Activated CD4-positive, alpha-beta memory T cell treated with anti-CD3 and anti-CD28 coated beads for 36 hours (primary cell): ENCODE measurements at regions of chr3 and their contacts with region 1.

Region 1: GRCh38 chr3:151227807-151228665 is 25.0 kb upstream of the GPR171 start:
- DNase-seq: peak; percentile 87
- H3K4me3 Mint-ChIP-seq: no peak overlapping the region
- H3K27ac Mint-ChIP-seq: peak overlapping the region; percentile 42
- H3K4me1 Mint-ChIP-seq: peaks cover 52% of the 10 kb centered on the region
- H3K27me3 Mint-ChIP-seq: no peaks in the 10 kb centered on the region

Region 2: DNA sequence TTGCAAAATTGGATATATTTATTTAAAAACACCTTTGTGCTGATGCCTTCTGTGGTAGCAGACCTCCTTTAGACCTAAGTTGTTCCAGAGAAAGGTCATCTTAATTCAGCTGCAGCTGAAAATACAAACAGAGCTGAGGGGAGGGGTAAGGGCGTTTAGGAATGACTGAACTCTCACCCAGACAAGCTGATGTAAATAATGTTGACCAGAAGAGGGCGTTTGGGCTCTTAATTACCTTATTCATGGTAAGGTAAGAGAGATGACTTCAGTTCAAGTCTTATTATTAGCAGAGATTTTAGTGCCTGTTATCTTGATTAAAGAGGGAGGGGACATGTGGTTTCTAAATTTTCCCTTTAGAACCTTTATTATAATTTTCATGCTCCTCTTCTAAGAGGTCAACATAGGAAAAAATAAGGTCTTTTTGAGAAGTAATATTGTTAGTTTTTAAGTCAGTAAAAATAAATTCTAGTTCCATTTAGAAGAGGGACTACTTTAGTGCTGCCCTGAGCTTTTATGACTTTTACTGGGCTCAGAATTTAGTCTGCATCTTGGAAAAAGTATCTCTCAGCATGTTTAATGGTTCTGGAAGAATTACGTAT is 71.3 kb before region 1 on chr3:
- CTCF ChIA-PET with region 1: interaction called, 24 read pairs
- POLR2A ChIA-PET with region 1: no interaction called
- intact Hi-C with region 1: loop called (anchors 2 kb)
- DNase-seq: no peak
- H3K4me3 Mint-ChIP-seq: no peak overlapping the region
- H3K27ac Mint-ChIP-seq: no peak overlapping the region
- H3K4me1 Mint-ChIP-seq: no peaks in the 10 kb centered on the region
- H3K27me3 Mint-ChIP-seq: no peaks in the 10 kb centered on the region

Region 3: GRCh38 chr3:151210676-151211381 is 17.2 kb before region 1 on chr3:
- CTCF ChIA-PET with region 1: interaction called, 22 read pairs
- POLR2A ChIA-PET with region 1: interaction called, 11 read pairs
- intact Hi-C with region 1: loop called (anchors 1 kb)
- DNase-seq: no peak
- H3K4me3 Mint-ChIP-seq: peak overlapping the region; percentile 62
- H3K27ac Mint-ChIP-seq: peak overlapping the region; percentile 91
- H3K4me1 Mint-ChIP-seq: peaks cover 61% of the 10 kb centered on the region
- H3K27me3 Mint-ChIP-seq: no peaks in the 10 kb centered on the region

Region 4: DNA sequence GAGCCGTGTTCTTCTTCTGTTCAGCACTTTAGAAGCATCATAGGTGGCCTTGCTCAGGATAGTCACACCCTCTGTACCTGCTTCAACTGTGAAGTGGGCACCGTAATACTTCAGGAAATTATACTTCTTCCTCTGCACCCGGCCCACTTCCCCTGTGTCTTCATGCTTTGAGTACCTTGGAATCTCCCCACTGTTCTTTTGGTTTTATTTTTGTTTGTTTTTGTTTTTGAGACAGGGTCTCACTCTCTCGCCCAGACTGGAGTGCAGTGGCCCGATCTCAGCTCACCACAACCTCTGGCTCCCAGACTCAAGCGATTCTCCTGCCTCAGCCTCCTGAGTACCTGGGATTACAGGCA is 48.6 kb after region 1 on chr3:
- CTCF ChIA-PET with region 1: interaction called, 155 read pairs
- POLR2A ChIA-PET with region 1: interaction called, 8 read pairs
- intact Hi-C with region 1: loop called (anchors 1 kb)
- DNase-seq: peak; percentile 55
- H3K4me3 Mint-ChIP-seq: peak overlapping the region; percentile 53
- H3K27ac Mint-ChIP-seq: peak overlapping the region; percentile 84
- H3K4me1 Mint-ChIP-seq: peaks cover 38% of the 10 kb centered on the region
- H3K27me3 Mint-ChIP-seq: no peaks in the 10 kb centered on the region

Region 5: DNA sequence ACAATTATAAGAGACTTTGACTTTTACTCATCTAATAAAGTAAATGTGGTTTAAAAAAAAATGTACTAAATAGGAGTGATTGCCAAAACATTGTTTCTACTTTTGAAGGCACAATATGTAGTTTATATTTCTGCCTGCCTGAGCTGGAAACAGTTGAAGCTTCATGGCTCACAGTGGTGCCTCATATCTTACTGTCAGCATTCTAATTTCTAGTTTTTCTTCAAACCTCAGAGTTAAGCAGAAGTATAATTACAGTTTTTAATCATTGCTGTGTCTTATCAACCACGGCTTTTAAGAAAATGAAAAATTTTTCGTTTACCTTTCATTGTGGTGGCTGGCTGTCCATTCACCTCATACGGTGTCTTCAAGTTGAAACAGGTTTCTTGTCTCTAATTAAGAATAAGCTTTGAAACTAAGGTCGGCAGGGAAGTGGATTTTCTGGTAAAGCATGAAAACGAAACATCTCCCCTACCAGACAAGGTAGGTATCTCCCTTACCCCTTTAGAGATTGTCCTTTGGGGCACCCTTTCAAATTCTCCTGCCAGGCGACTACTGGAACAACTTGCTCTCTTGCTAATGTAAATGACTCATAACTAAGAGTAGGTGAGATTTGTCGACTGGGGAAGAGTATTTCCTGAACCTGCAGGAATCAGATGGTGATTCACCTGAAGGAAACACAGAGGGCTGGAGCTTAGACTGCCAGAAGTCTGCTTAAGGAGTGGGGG is 88.4 kb after region 1 on chr3 and contains the start of gene GPR87:
- CTCF ChIA-PET with region 1: interaction called, 11 read pairs
- POLR2A ChIA-PET with region 1: no interaction called
- intact Hi-C with region 1: no loop called
- DNase-seq: peak; percentile 61
- H3K4me3 Mint-ChIP-seq: peak within 1 kb of the TSS; percentile 17
- H3K27ac Mint-ChIP-seq: peak within 1 kb of the TSS; percentile 68
- H3K4me1 Mint-ChIP-seq: peaks cover 24% of the 10 kb centered on the region
- H3K27me3 Mint-ChIP-seq: peaks cover 8% of the 10 kb centered on the region
- total RNA-seq, gene GPR87: 1.1 TPM

Region 6: DNA sequence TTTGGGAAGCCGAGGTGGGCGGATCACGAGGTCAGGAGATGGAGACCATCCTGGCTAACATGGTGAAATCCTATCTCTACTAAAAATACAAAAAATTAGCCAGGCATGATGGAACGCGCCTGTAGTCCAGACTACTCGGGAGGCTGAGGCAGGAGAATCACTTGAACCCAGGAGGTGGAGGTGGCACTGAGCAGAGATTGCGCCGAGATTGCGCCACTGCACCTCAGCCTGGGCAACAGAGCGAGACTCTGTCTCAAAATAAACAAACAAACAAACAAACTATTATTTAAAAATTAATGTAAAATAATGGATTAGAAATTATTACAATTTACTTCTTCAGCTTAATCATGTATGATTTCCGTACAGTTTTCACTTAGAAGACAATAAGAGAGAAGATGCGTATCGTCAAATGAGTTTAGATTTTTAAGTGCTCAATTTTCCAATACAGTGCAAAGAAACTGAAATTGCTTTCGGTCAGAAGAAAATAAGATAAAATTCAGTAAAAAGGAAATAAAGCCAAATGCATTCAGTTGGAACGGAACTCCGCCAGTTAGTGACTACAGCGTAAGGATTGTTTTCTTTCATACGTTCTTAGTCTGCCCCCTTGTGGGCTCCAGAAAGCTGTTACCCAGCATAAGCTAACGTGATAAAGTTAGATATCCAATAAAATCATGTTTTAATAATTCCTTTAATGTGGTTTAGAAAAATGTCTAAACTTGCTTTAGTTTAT is 610.7 kb after region 1 on chr3:
- CTCF ChIA-PET with region 1: interaction called, 29 read pairs
- POLR2A ChIA-PET with region 1: no interaction called
- intact Hi-C with region 1: loop called (anchors 1 kb)
- DNase-seq: peak; percentile 30
- H3K4me3 Mint-ChIP-seq: no peak overlapping the region
- H3K27ac Mint-ChIP-seq: no peak overlapping the region
- H3K4me1 Mint-ChIP-seq: peaks cover 3% of the 10 kb centered on the region
- H3K27me3 Mint-ChIP-seq: peaks cover 5% of the 10 kb centered on the region